Activated B cell treated with CpG ODN at 0.5 μM for 24 hours (primary cell): ENCODE measurements at regions of chr1 and their contacts with region 1.

Region 1: DNA sequence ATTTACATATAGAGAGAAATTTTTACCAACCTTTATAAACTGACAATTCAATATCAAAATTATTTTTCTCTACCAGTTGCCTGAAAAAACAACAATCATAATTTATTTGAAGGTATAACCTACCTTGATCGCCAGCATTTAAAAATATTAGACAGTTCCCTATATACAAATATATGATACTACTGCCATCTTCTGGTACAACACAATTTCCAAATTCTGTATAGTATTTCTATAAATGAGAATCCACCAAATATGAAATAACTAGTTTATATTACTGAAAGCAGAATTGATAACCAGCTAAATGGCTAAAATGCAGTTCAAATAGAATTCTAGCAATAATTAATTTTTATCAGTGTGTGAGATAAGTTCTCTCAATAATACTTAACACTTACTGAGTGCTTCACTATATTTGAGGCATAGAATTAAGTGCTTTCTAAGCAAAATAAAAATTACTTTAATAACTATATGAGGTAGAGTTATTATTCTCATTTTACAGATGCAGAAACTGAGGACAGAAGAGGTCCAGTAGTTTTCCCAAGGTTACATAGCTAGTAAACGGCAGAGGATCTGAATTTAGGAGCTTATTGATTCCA is 75.6 kb downstream of the PIGK start:
- DNase-seq: no peak
- ATAC-seq: no peak
- H3K4me3 Mint-ChIP-seq: no peak overlapping the region
- H3K27ac Mint-ChIP-seq: no peak overlapping the region
- H3K4me1 Mint-ChIP-seq: no peaks in the 10 kb centered on the region
- H3K27me3 Mint-ChIP-seq: no peaks in the 10 kb centered on the region
- CTCF ChIP-seq: no peak

Region 2: DNA sequence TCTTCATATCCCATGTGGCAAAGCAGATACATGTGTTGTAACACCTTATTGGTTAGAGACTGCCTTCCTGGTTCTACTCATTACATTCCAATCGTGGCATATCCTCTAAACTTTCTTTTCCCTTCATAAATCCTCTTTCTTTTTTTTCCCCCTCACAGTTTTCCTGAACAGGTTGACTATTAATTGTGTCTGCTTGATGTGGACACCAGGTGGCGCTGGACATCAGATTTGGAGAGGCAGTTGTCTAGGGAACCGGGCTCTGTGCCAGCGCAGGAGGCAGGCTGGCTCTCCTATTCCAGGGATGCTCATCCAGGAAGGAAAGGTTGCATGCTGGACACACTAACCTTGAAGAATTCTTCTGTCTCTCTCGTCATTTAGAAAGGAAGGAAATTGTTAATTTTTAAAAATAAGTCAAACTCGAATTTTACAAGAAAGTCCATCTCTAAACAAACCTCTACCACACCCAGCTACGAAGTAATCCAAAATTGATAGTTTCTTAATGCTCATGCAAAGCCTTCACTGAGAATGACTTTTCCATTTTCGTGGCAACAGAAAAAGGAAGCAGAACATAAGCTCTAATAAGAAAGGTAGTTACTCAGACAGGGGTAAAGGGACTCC is 1152.0 kb before region 1 on chr1:
- CTCF ChIA-PET with region 1: interaction called, 3 read pairs
- POLR2A ChIA-PET with region 1: no interaction called
- intact Hi-C with region 1: loop called (anchors 1 kb)
- DNase-seq: peak; percentile 30
- ATAC-seq: peak; percentile 58
- H3K4me3 Mint-ChIP-seq: no peak overlapping the region
- H3K27ac Mint-ChIP-seq: no peak overlapping the region
- H3K4me1 Mint-ChIP-seq: no peaks in the 10 kb centered on the region
- H3K27me3 Mint-ChIP-seq: peaks cover 3% of the 10 kb centered on the region
- CTCF ChIP-seq: peak; percentile 48

Region 3: DNA sequence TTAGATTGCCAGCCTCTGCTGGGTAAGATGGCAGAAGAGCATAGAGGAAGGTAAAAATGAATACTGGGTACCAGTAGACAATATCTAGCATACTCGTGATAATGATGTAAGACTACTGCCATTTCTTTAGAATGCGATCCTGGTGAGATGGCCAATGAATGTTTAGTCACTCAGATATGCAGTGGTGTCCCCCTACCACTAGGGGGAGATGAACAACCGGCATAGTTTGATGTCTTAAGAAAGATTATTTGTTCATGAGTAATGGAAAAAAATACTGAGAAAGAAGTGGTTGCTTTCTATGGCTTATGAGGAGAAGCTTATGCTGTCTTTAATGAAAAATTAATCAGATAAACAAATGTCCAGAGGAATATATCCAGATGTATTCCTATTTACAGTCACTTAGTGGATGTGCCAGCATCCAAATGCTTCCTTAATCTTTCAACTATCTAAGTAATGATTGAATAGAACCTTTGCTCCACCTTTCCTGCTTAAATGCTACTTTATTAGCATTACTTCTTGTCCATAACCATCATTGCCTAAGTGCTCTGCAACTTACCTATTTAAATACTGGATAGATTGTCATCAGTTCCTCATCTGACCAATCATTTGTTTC is 812.5 kb before region 1 on chr1:
- CTCF ChIA-PET with region 1: no interaction called
- POLR2A ChIA-PET with region 1: no interaction called
- intact Hi-C with region 1: loop called (anchors 1 kb)
- DNase-seq: no peak
- ATAC-seq: no peak
- H3K4me3 Mint-ChIP-seq: no peak overlapping the region
- H3K27ac Mint-ChIP-seq: no peak overlapping the region
- H3K4me1 Mint-ChIP-seq: peaks cover 3% of the 10 kb centered on the region
- H3K27me3 Mint-ChIP-seq: peaks cover 2% of the 10 kb centered on the region
- CTCF ChIP-seq: peak; percentile 95

Region 4: GRCh38 chr1:76901158-76901767 is 242.4 kb before region 1 on chr1:
- CTCF ChIA-PET with region 1: no interaction called
- POLR2A ChIA-PET with region 1: no interaction called
- intact Hi-C with region 1: loop called (anchors 2 kb)
- DNase-seq: no peak
- ATAC-seq: no peak
- H3K4me3 Mint-ChIP-seq: no peak overlapping the region
- H3K27ac Mint-ChIP-seq: no peak overlapping the region
- H3K4me1 Mint-ChIP-seq: no peaks in the 10 kb centered on the region
- H3K27me3 Mint-ChIP-seq: peaks cover 2% of the 10 kb centered on the region
- CTCF ChIP-seq: no peak

Region 5: DNA sequence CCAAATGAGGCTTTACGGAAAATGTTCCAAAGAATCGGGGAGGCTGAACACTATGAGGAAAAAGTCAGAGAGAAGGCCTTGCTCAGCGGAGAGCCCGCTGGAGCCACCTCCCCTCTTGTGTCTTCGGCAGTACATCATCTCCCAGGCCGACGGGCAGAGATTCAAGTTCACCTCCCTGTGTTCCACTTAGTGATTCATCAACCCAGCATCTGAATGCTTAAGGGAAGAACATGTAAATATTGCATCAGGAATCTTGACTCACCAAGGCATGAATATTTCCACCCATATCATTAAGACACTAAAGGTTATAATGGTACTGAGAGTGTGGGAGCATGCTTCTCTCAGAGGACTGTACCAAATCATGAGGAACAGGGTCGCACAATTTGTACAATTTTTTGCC is 103.9 kb before region 1 on chr1:
- CTCF ChIA-PET with region 1: no interaction called
- POLR2A ChIA-PET with region 1: no interaction called
- intact Hi-C with region 1: no loop called
- DNase-seq: no peak
- ATAC-seq: no peak
- H3K4me3 Mint-ChIP-seq: no peak overlapping the region
- H3K27ac Mint-ChIP-seq: no peak overlapping the region
- H3K4me1 Mint-ChIP-seq: no peaks in the 10 kb centered on the region
- H3K27me3 Mint-ChIP-seq: peaks cover 2% of the 10 kb centered on the region
- CTCF ChIP-seq: no peak

Region 6: GRCh38 chr1:77533660-77534305 is 390.2 kb after region 1 on chr1:
- CTCF ChIA-PET with region 1: interaction called, 3 read pairs
- POLR2A ChIA-PET with region 1: no interaction called
- intact Hi-C with region 1: loop called (anchors 1 kb)
- DNase-seq: no peak
- ATAC-seq: no peak
- H3K4me3 Mint-ChIP-seq: no peak overlapping the region
- H3K27ac Mint-ChIP-seq: no peak overlapping the region
- H3K4me1 Mint-ChIP-seq: peaks cover 4% of the 10 kb centered on the region
- H3K27me3 Mint-ChIP-seq: peaks cover 4% of the 10 kb centered on the region
- CTCF ChIP-seq: no peak

Region 7: DNA sequence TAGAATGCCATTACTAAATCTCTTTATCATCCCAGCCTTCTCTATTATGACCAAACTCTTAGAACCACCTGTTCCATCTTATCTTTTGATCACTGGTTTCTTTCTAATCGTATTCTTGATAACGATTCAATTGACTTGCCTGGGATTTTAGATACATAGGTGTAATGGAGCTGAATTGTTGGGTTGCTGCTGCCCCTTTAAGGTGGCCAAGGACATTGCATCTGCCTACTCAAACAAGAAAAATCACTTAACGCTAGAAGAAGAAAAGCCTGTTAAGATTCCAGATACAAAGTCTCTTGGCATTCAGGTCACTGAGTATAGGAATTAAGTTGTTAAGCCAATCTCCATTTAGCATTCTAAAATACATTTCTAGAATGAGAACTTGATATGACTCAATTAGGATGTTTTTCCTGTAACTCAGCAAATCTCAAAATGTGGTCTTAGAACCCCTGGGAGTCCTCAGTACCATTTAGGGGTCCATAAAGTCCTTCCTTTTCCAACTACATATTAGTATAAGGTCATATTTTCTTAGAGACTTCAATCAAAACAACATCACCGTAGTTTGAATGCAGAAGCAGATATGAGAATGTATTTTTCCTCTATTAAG is 757.2 kb after region 1 on chr1:
- CTCF ChIA-PET with region 1: no interaction called
- POLR2A ChIA-PET with region 1: no interaction called
- intact Hi-C with region 1: loop called (anchors 2 kb)
- DNase-seq: no peak
- ATAC-seq: no peak
- H3K4me3 Mint-ChIP-seq: no peak overlapping the region
- H3K27ac Mint-ChIP-seq: no peak overlapping the region
- H3K4me1 Mint-ChIP-seq: no peaks in the 10 kb centered on the region
- H3K27me3 Mint-ChIP-seq: no peaks in the 10 kb centered on the region
- CTCF ChIP-seq: no peak